ENCODE measurements at regions of chr9 and their contacts with region 1.

Region 1: GRCh38 chr9:95341293-95341962 is 23.9 kb upstream of the FANCC start:
- DNase-seq: no peak
- H3K4me3 Mint-ChIP-seq: no peak overlapping the region
- H3K27ac Mint-ChIP-seq: no peak overlapping the region
- H3K4me1 Mint-ChIP-seq: peaks cover 14% of the 10 kb centered on the region
- H3K27me3 Mint-ChIP-seq: peaks cover 27% of the 10 kb centered on the region

Region 2: DNA sequence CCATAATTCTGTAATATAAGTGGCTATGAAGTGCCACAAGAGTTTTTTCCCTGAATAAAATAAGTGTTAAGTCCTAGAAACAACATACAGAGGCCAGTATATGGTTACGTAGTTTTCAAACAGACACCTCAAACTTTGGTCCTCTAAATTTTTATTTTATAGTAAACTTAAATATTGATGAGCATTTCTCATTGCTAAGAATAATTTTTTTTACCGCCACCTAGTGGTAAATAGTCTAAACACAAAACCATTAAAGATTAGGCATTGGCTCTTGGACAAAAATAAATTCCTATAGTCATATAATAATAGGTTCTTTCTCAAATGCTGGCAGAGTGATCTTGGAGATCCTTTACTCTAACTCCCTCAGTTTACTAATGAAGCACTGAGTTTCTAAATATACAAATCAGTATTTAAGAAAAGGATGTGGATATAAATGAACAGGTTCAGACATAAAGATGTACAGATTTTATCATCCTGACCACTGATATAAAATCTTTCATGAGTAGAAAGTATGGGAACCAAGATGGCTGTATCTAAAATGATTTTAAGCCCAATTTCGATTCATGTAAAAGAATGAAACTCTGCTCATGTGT is 160.1 kb before region 1 on chr9:
- intact Hi-C with region 1: loop called (anchors 10 kb)
- DNase-seq: no peak
- H3K4me3 Mint-ChIP-seq: no peak overlapping the region
- H3K27ac Mint-ChIP-seq: no peak overlapping the region
- H3K4me1 Mint-ChIP-seq: peaks cover 3% of the 10 kb centered on the region
- H3K27me3 Mint-ChIP-seq: no peaks in the 10 kb centered on the region

Region 3: DNA sequence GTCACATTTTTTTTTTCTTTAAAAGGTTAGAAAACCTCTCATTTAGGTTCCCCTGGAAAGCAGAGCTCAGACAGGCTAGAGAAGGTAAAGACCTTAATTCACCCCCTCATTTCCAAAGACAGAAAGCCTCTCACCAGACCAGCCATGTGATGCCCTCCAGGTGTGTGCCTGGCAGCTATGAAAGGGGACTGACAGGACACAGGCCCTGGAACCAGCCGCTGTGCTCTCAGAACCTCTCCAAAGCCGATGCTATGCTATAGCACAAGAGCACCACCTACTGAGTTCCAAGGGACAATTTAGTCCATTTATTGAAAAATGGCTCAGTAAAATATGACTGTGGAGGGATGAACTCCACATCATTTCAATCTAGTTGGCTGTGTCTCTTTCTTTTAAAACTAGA is 72.7 kb before region 1 on chr9:
- intact Hi-C with region 1: loop called (anchors 5 kb)
- DNase-seq: no peak
- H3K4me3 Mint-ChIP-seq: no peak overlapping the region
- H3K27ac Mint-ChIP-seq: no peak overlapping the region
- H3K4me1 Mint-ChIP-seq: peaks cover 42% of the 10 kb centered on the region
- H3K27me3 Mint-ChIP-seq: no peaks in the 10 kb centered on the region

Region 4: GRCh38 chr9:95462249-95463147 is 121.1 kb after region 1 on chr9:
- intact Hi-C with region 1: loop called (anchors 5 kb)
- DNase-seq: peak; percentile 81
- H3K4me3 Mint-ChIP-seq: peak overlapping the region; percentile 71
- H3K27ac Mint-ChIP-seq: peak overlapping the region; percentile 21
- H3K4me1 Mint-ChIP-seq: peaks cover 29% of the 10 kb centered on the region
- H3K27me3 Mint-ChIP-seq: peaks cover 43% of the 10 kb centered on the region

Measured in activated T-helper 2 cell treated with anti-CD3 and anti-CD28 coated beads, Interferon-gamma antibody, Interleukin-2, Interleukin-4, amounts not matched to agents 10 μg/mL and 5 μg/mL and 100 μg/mL, durations not matched to agents 14 hours and 24 hours and 36 hours (primary cell).